ENCODE measurements at regions of chr1 and their contacts with region 1.

Region 1: DNA sequence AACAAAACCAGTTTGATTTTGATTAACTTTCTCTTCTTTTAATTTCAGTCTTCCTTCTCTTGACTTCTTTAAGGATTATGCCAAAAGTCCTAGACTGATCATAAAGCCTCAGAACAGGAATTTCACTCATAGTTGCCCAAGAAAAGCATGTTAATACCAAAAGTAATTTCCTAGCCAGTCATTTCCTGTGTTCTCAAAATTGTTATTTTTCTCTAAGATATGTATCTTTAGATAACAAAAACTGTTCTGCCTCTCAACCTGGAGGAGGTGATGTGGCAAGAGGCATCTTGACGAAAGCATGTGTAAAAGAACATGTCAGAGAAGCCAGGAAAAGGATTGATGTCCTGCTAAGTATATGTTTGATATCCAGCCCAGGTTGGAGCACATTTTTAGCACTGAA is 78.0 kb upstream of the IPO9 start:
- DNase-seq: no peak
- ATAC-seq: no peak
- H3K4me3 ChIP-seq: no peak overlapping the region
- H3K27ac ChIP-seq: no peak overlapping the region
- H3K4me1 ChIP-seq: no peaks in the 10 kb centered on the region
- H3K27me3 ChIP-seq: peaks cover 0 to 22% (median 0%) of the 10 kb centered on the region in 3 donors
- CTCF ChIP-seq: no peak

Region 2: DNA sequence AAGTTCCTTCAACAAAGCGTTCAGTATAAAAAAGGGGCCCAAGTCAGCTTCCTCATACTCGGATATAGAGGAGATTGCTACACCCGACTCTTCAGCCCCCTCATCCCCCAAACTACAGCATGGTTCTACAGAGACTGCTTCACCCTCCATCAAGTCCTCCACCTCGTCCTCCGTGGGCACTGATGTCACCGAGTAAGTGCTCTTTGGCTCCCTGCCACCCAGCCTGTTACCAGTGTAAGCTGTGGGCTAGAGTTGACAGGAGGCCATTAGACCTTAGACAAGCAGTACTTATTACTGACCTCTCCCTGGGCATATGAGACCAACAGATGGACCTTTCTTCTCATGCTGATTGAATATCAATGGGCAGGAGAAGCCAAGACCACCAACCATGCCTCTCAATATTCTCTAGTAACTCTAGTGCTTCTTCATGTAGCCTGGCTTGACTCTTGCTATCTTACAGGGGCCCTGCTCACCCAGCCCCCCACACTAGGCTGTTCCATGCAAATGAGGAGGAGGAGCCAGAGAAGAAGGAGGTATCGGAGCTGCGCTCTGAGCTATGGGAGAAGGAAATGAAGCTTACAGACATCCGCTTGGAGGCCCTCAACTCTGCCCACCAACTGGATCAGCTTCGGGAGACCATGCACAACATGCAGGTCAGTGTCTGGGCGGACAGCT is 57.2 kb after region 1 on chr1:
- intact Hi-C with region 1: loop called in 1 of 2 experiments (anchors 2 kb)
- DNase-seq: peak in 1 of 2 donors; percentile 46
- ATAC-seq: no peak
- H3K4me3 ChIP-seq: no peak overlapping the region
- H3K27ac ChIP-seq: no peak overlapping the region
- H3K4me1 ChIP-seq: no peaks in the 10 kb centered on the region
- H3K27me3 ChIP-seq: no peaks in the 10 kb centered on the region
- CTCF ChIP-seq: no peak

Region 3: GRCh38 chr1:202034683-202035462 is 283.9 kb after region 1 on chr1:
- intact Hi-C with region 1: no loop called
- DNase-seq: peak; percentile 72 to 84
- ATAC-seq: peak; percentile 52 to 76 (median 60)
- H3K4me3 ChIP-seq: no peak overlapping the region
- H3K27ac ChIP-seq: no peak overlapping the region
- H3K4me1 ChIP-seq: no peaks in the 10 kb centered on the region
- H3K27me3 ChIP-seq: no peaks in the 10 kb centered on the region
- CTCF ChIP-seq: no peak

Measured in psoas muscle (tissue), 8 donors.